ENCODE measurements at regions of chr4 and their contacts with region 1.

Region 1: DNA sequence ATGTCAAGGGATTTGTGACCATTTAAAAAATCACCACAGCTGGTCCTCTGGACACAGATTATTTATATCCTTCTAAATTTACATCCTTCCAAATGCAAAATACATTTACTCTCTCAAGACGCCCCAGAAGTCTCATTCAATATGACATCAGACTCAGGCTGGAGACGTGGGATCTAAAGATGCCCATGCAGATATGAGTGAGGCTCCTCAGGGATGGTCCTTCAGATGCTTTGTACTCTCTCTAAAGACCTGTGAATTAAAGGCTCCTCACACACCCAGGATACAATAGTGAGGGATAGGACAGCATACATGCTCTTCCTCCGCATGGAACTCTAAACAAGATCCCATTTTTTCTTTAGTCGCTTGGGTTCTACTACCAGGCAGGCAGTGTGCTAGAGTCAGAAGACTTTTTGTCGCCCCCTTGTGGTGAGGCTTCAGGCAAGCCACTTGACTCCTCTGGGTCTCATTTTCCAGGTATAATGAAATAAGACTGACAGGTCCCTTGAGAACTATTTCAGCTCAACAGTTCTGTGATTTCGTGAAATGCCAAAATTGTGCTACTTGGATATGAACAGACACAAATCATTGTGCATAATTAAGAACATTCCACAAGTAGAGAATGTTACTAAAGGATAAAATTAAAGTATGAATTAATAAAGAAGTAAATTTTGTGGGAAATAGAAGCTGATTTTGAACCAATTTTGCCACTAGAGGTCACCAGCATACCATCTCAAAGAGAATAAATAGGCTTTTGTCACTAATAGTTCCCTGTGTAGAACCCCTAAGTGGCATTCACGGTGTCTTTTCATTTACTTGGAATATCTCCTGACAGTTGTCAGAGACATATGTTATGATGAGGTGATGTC is 13.7 kb upstream of the SCOC start:
- DNase-seq: peak; percentile 86
- H3K4me3 ChIP-seq: no peak overlapping the region
- H3K27ac ChIP-seq: no peak overlapping the region
- H3K4me1 ChIP-seq: no peaks in the 10 kb centered on the region
- CTCF ChIP-seq: peak; percentile 100

Region 2: DNA sequence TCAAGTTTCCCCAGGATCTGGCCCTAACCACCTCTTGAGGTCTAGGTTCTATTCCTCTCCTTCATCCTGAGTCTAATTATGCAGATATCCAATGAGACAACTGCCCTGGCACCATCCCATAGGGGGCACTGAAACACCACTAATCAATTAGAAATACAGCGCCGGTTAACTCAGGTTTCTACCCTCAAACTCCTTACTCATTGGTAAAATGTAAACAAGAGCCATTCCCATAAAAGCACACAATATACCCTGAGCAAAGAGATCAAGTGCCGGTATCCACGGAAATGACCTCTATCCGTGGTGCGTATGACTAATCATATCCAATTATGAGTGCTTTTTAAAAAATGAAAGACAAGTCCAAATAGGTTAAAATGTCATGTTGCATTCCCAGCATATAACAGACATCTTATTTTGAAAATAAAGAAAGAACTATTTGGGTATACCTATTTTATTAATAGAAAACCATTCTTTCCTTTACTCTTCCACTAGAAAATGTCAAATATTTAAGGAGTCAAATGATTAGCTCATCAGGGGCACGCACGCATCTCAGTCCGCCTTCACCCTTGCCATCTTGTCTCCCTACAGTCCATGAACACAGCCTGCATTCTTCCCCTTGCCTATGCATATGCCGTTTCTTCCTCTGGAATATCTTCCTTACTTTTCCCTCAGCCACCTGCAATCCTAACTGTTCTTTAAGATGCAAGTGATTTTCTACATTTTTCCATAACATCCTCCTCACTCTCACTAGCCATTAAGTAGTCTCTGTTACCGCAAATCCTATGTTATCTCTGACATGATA is 346.9 kb before region 1 on chr4:
- CTCF ChIA-PET with region 1: no interaction called
- POLR2A ChIA-PET with region 1: no interaction called
- intact Hi-C with region 1: loop called (anchors 2 kb)
- DNase-seq: peak; percentile 37
- H3K4me3 ChIP-seq: no peak overlapping the region
- H3K27ac ChIP-seq: no peak overlapping the region
- H3K4me1 ChIP-seq: no peaks in the 10 kb centered on the region
- CTCF ChIP-seq: peak; percentile 82

Region 3: DNA sequence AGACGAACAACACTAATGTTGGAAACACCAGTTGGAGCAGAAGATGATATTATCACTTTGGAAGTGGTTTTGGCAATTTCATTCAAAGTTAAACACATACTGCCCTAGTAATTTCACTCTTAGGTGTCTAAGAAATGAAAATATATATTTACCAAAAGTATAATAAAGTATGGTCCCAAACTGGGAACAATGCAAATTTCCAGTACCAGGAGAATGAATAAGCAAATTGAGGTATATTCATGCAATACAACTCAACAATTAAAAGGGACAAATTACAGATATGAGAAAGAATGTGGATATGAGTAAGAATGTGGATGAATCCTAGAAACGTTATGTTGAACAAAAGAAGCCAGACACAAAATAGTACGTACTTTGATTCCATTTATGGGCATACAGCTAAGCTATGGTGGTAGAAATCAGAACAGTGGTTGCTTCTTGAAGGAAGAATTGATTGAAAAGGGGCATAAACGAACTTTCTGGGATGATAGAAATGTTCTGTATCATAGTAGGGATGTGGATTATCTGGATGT is 174.2 kb after region 1 on chr4:
- CTCF ChIA-PET with region 1: no interaction called
- POLR2A ChIA-PET with region 1: no interaction called
- intact Hi-C with region 1: no loop called
- DNase-seq: no peak
- H3K4me3 ChIP-seq: no peak overlapping the region
- H3K27ac ChIP-seq: no peak overlapping the region
- H3K4me1 ChIP-seq: no peaks in the 10 kb centered on the region
- CTCF ChIP-seq: no peak

Region 4: DNA sequence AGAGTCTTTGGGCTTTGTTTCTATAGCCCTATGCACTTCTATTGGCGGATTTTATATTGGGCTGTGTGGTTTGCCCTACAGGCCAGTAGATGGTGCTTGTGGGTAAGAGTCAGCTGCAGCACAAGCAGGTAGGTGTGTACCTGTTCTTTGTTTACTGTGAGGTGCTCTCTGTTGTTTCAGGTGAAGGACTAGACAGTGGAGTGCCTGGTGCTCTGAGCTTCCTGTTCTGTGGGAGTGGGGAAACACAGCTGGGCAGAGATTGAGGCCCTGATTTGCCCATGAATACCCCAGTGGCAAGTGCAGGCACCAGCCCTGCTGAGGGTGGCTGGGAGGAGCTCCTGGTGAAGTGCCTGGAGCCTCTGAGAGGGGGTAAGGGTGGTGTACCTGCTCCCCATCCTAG is 235.3 kb after region 1 on chr4:
- CTCF ChIA-PET with region 1: no interaction called
- POLR2A ChIA-PET with region 1: no interaction called
- intact Hi-C with region 1: loop called (anchors 1 kb)
- DNase-seq: peak; percentile 73
- H3K4me3 ChIP-seq: no peak overlapping the region
- H3K27ac ChIP-seq: no peak overlapping the region
- H3K4me1 ChIP-seq: peaks cover 2% of the 10 kb centered on the region
- CTCF ChIP-seq: peak; percentile 87

Region 5: GRCh38 chr4:140637836-140638235 is 278.0 kb after region 1 on chr4:
- CTCF ChIA-PET with region 1: no interaction called
- POLR2A ChIA-PET with region 1: no interaction called
- intact Hi-C with region 1: loop called (anchors 1 kb)
- DNase-seq: peak; percentile 85
- H3K4me3 ChIP-seq: no peak overlapping the region
- H3K27ac ChIP-seq: no peak overlapping the region
- H3K4me1 ChIP-seq: peaks cover 20% of the 10 kb centered on the region
- CTCF ChIP-seq: peak; percentile 99

Region 6: GRCh38 chr4:140884431-140885058 is 524.8 kb after region 1 on chr4:
- CTCF ChIA-PET with region 1: interaction called, 6 read pairs
- POLR2A ChIA-PET with region 1: interaction called, 4 read pairs
- intact Hi-C with region 1: loop called (anchors 2 kb)
- DNase-seq: peak; percentile 86
- H3K4me3 ChIP-seq: no peak overlapping the region
- H3K27ac ChIP-seq: no peak overlapping the region
- H3K4me1 ChIP-seq: no peaks in the 10 kb centered on the region
- CTCF ChIP-seq: peak; percentile 98